H1 (cell line): ENCODE measurements at regions of chr6 and their contacts with region 1.

Region 1: GRCh38 chr6:133817460-133818047 is 71.4 kb upstream of the TCF21 start:
- DNase-seq: peak; percentile 61 to 96
- H3K4me3 ChIP-seq: no peak overlapping the region
- H3K27ac ChIP-seq: no peak overlapping the region
- H3K4me1 ChIP-seq: peaks cover 0 to 2% (median 0%) of the 10 kb centered on the region in 4 experiments; a peak in 1 of 7 replicates
- H3K27me3 ChIP-seq: no peaks in the 10 kb centered on the region
- CTCF ChIP-seq: peak; percentile 73 to 96 (median 91)
- EP300 ChIP-seq: no peak
- POLR2A ChIP-seq: no peak
- RAD21 ChIP-seq: peak; percentile 72 to 74

Region 2: DNA sequence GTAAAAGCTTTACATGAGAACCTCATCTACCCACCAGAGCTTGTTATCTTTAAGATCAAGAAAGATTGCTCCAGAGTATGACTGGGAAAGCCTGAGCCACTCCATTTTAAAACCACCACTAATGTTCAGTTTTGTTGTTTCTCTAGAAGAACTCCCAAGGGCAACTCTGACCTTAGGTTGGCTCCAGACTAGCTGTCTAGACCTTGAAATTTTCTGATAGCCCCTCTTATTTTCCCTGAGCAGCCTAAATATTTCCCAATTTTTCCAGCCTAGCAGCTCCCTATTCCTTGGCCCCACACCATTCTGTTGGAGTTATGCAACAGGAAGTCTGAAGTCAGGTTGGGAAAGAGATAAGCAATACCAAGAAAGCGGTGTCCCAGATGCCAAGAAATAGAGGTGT is 13.3 kb before region 1 on chr6:
- CTCF ChIA-PET with region 1: interaction called, 33 read pairs
- POLR2A ChIA-PET with region 1: no interaction called
- DNase-seq: no peak
- H3K4me3 ChIP-seq: no peak overlapping the region
- H3K27ac ChIP-seq: no peak overlapping the region
- H3K4me1 ChIP-seq: no peaks in the 10 kb centered on the region
- H3K27me3 ChIP-seq: no peaks in the 10 kb centered on the region
- CTCF ChIP-seq: no peak
- EP300 ChIP-seq: no peak
- POLR2A ChIP-seq: no peak
- RAD21 ChIP-seq: no peak

Region 3: DNA sequence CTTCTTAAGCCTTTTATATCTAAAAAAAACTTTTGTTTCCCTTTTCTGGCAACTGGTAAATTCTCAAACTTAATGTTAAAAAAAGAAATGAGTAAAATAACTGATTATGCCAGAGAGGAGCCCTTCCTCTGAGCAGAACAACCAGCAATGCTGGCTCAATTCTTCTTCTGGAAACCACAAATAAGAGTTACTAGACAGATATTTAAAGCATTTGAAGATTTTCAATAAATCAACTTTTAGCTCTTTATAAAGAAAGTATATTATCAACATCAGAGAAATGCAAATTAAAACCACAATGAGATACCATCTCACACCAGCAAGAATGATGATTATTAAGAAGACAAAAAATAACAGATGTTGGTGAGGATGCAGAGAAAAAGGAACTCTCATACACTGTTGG is 10.2 kb after region 1 on chr6:
- CTCF ChIA-PET with region 1: interaction called, 48 read pairs
- POLR2A ChIA-PET with region 1: no interaction called
- DNase-seq: no peak
- H3K4me3 ChIP-seq: no peak overlapping the region
- H3K27ac ChIP-seq: no peak overlapping the region
- H3K4me1 ChIP-seq: no peaks in the 10 kb centered on the region
- H3K27me3 ChIP-seq: no peaks in the 10 kb centered on the region
- CTCF ChIP-seq: no peak
- EP300 ChIP-seq: no peak
- POLR2A ChIP-seq: no peak
- RAD21 ChIP-seq: no peak

Region 4: DNA sequence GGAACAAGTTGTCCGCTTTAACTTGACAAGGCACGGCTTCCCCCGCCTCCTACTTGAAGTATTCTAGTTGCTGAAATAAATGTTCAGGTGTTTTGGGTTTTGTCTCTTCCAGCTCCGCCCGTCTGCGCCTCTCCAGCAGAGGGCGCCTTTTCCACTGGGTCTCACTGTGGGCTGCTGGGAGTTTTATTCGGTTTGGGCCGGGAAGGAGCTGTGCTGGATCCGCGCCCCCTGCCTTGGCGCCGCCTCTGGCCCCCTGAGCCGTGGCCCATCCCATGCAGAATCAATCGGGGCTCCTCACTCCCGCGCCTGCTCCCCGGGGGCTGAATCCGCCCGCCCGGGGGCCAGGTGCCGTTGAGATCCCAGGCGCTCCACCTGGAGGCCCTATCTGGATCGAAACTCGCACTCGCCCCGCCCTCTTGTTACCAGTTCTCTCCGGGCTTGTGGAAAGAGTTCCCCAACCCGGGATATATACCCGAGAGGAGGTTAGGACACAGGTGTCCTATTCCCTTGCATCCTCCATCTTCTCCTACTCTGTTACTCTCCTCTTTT is 20.3 kb after region 1 on chr6:
- CTCF ChIA-PET with region 1: interaction called, 19 read pairs
- POLR2A ChIA-PET with region 1: no interaction called
- DNase-seq: peak; percentile 87 to 93
- H3K4me3 ChIP-seq: peak overlapping the region; percentile 40 to 68 (median 50)
- H3K27ac ChIP-seq: peak overlapping the region; percentile 49; the same call in 1 of the 2 replicates
- H3K4me1 ChIP-seq: peaks cover 0 to 2% (median 0%) of the 10 kb centered on the region in 4 experiments; a peak in 2 of 7 replicates
- H3K27me3 ChIP-seq: no peaks in the 10 kb centered on the region
- CTCF ChIP-seq: peak; percentile 87 to 94 (median 91)
- EP300 ChIP-seq: no peak
- POLR2A ChIP-seq: peak in 1 of 2 experiments; percentile 51; a peak in 1 of 3 replicates
- RAD21 ChIP-seq: peak; percentile 68 to 79